Esophagus squamous epithelium (tissue), 5 donors: ENCODE measurements at regions of chr5 and their contacts with region 1.

Region 1: GRCh38 chr5:157994906-157995519 is 136.1 kb upstream of the CLINT1 start:
- DNase-seq: no peak
- H3K4me3 ChIP-seq: no peak overlapping the region
- H3K27ac ChIP-seq: peak overlapping the region in 2 of 4 donors; percentile 3 to 18
- H3K4me1 ChIP-seq: peaks cover 0 to 32% (median 5%) of the 10 kb centered on the region in 3 donors
- H3K27me3 ChIP-seq: no peaks in the 10 kb centered on the region
- CTCF ChIP-seq: peak; percentile 34 to 85 (median 78)
- POLR2A ChIP-seq: no peak

Region 2: DNA sequence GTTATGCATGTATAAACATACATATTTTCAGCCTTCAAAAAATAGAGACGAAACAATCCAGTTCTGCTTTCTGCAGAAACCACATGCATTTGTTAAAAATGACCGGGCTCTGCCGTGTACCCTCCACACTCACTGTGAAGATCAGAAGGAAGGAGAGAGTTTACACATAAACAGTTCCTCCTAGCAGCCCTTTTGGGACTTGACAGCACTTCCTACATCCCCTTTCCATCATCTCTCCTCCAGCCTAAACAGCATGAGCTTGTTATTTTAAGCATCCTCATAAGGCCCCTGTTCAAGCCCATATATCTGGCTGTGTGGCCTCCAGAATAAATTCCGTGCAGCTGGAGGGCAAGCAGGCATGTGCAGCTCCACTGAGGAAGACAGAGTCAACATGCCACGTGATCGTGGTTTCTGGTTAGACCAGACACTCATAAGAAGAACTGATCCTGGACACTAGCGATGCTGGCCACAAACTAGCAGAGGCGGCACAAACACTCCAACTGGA is 492.8 kb before region 1 on chr5:
- intact Hi-C with region 1: no loop called
- DNase-seq: no peak
- H3K4me3 ChIP-seq: no peak overlapping the region
- H3K27ac ChIP-seq: no peak overlapping the region
- H3K4me1 ChIP-seq: peaks cover 3 to 6% (median 3%) of the 10 kb centered on the region in 3 donors
- H3K27me3 ChIP-seq: no peaks in the 10 kb centered on the region
- CTCF ChIP-seq: no peak
- POLR2A ChIP-seq: no peak

Region 3: GRCh38 chr5:157670662-157671591 is 324.1 kb before region 1 on chr5 and contains the start of gene C5orf52:
- intact Hi-C with region 1: no loop called
- DNase-seq: no peak
- H3K4me3 ChIP-seq: peak within 1 kb of the TSS; percentile 46 to 81 (median 57)
- H3K27ac ChIP-seq: peak within 1 kb of the TSS in 1 of 4 donors; percentile 30
- H3K4me1 ChIP-seq: peaks cover 0 to 17% (median 11%) of the 10 kb centered on the region in 3 donors
- H3K27me3 ChIP-seq: peaks cover 0 to 10% (median 0%) of the 10 kb centered on the region in 4 donors
- CTCF ChIP-seq: no peak
- POLR2A ChIP-seq: no peak
- total RNA-seq, gene C5orf52: not detected

Region 4: GRCh38 chr5:157718519-157718918 is 276.5 kb before region 1 on chr5:
- intact Hi-C with region 1: no loop called
- DNase-seq: no peak
- H3K4me3 ChIP-seq: no peak overlapping the region
- H3K27ac ChIP-seq: no peak overlapping the region
- H3K4me1 ChIP-seq: peaks cover 0 to 13% (median 0%) of the 10 kb centered on the region in 3 donors
- H3K27me3 ChIP-seq: no peaks in the 10 kb centered on the region
- CTCF ChIP-seq: peak; percentile 30 to 72 (median 58)
- POLR2A ChIP-seq: no peak

Region 5: DNA sequence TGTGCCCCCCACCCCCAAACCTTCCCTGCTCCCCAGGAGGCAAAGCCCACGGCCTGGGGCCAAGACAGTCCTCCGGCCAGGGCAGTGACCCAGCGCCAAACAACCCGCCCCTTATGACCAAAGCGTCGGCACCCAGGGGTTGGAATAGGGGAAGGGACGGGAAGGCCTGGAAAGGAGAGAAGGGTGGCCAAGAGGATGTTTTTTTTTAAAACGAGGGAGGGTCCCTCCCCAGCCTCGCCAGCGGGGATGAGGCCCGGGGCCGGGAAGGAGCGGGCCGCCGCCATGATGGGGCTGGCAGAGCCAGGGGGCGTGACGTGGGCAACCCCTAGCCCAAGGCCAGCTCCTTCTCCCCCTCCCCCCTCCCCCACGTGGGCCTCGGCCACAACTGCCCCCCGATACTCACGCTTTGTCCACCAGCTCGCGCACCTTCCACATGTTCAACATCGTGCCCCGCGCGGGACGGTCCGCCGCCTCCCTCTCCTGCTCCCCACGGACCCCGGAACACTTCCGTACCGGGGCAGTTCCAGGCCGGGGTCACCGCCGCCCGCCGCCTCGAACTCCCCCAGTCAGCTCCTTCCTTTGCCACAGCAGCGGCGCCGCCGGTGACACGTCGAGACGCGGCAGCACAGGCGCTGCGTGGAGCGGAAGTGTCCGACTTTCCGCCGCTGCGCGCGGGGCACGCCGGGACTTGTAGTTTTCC is 136.3 kb before region 1 on chr5 and contains the start of gene CLINT1:
- intact Hi-C with region 1: loop called (anchors 10 kb)
- DNase-seq: peak; percentile 73
- H3K4me3 ChIP-seq: peak within 1 kb of the TSS; percentile 90 to 99 (median 94)
- H3K27ac ChIP-seq: peak within 1 kb of the TSS; percentile 94 to 98 (median 96)
- H3K4me1 ChIP-seq: peaks cover 7 to 55% (median 26%) of the 10 kb centered on the region in 3 donors
- H3K27me3 ChIP-seq: no peaks in the 10 kb centered on the region
- CTCF ChIP-seq: peak in 1 of 6 experiments; percentile 9
- POLR2A ChIP-seq: peak in 3 of 4 donors; percentile 16 to 93 (median 67)
- total RNA-seq, gene CLINT1: 109 to 165 (median 152) TPM

Region 6: DNA sequence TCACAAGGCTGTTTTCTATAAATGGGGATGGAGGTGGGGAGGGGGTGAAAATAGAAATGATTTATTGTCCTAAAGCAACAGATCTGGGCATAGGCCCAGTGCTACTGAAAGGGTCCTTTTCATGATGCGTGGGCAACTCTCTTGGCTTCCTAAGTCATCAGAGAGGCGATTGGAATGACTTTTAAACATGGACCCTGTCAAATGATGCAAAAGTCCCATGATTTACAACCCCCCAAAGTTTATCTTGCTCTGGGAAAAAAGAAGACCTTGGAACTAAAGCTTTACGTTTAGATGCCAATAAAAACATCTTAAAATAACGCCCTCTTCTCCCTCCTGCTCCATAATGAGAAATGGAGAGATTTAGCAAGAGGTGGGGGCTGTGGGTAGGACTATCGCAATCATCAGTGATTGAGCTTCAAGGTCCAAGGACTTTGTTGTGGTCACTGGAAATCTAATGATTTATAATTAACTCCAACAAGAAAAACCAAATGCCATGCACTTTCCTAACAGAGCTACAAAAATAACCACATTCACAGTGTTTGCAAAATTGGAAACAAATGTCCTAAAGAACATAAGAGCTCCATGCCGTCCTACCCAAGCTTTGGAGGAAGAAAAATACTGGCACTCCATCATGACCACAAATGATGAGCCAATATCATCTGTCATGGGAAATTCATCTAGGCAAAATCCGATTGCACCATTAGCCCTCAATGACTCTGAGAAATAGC is 31.5 kb after region 1 on chr5:
- intact Hi-C with region 1: no loop called
- DNase-seq: no peak
- H3K4me3 ChIP-seq: no peak overlapping the region
- H3K27ac ChIP-seq: peak overlapping the region in 1 of 4 donors; percentile 31
- H3K4me1 ChIP-seq: peaks cover 0 to 6% (median 3%) of the 10 kb centered on the region in 3 donors
- H3K27me3 ChIP-seq: no peaks in the 10 kb centered on the region
- CTCF ChIP-seq: no peak
- POLR2A ChIP-seq: no peak